WTC11 (cell line): ENCODE measurements at regions of chr2 and their contacts with region 1.

Region 1: GRCh38 chr2:10408649-10409579 is 39.2 kb downstream of the ODC1 start:
- DNase-seq: peak; percentile 90
- ATAC-seq: peak; percentile 94
- H3K4me3 Mint-ChIP-seq: no peak overlapping the region
- H3K27ac Mint-ChIP-seq: no peak overlapping the region
- H3K4me1 Mint-ChIP-seq: peaks cover 9% of the 10 kb centered on the region
- H3K27me3 Mint-ChIP-seq: no peaks in the 10 kb centered on the region
- CTCF ChIP-seq: peak; percentile 93

Region 2: DNA sequence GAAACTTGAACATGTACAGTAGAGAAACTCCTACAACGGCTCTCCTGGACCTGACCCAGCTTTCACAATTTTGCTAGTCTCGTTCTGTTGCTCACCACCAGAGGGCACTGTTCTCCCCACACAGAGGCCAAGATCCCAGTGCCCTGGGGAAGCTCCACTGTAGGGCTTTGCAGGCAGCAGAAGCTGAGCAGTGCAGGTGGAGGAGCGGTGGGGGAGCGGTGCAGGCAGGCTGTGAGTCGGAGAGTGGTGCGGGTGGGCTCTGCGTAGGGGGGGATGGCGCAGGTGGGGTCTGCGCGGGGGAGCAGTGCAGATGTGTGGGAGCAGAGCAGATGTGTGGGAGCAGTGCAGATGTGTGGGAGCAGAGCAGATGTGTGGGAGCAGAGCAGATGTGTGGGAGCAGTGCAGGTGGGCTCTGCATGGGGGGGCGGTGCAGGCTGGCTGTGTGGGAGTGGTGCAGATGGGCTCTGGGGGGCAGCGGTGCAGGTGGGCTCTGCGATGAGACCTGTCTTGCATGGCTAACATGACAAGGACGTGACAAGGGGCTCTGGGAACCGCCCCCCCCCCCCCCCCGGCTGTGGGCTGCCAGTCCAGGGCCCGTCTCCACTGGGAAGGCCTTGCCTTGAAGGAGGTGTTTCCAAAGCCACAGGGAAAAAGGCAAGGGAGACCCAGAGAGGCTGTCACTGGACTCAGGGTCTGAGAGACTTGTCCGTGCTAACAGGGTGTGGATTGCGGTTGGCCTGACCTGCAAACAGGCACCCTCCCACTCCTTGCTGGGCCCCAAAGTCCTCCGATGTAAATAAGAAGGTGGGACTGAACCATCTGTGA is 336.0 kb before region 1 on chr2:
- CTCF ChIA-PET with region 1: interaction called, 21 read pairs
- POLR2A ChIA-PET with region 1: no interaction called
- DNase-seq: peak; percentile 83
- ATAC-seq: peak; percentile 97
- H3K4me3 Mint-ChIP-seq: no peak overlapping the region
- H3K27ac Mint-ChIP-seq: no peak overlapping the region
- H3K4me1 Mint-ChIP-seq: peaks cover 18% of the 10 kb centered on the region
- H3K27me3 Mint-ChIP-seq: peaks cover 14% of the 10 kb centered on the region
- CTCF ChIP-seq: peak; percentile 89

Region 3: GRCh38 chr2:10162586-10163497 is 246.1 kb before region 1 on chr2:
- CTCF ChIA-PET with region 1: interaction called, 24 read pairs
- POLR2A ChIA-PET with region 1: no interaction called
- DNase-seq: peak; percentile 56
- ATAC-seq: peak; percentile 66
- H3K4me3 Mint-ChIP-seq: no peak overlapping the region
- H3K27ac Mint-ChIP-seq: peak overlapping the region; percentile 91
- H3K4me1 Mint-ChIP-seq: 0 out of 2 replicates have a peak, but pooled peaks cover 3% of the 10 kb centered on the region
- H3K27me3 Mint-ChIP-seq: no peaks in the 10 kb centered on the region
- CTCF ChIP-seq: no peak

Region 4: DNA sequence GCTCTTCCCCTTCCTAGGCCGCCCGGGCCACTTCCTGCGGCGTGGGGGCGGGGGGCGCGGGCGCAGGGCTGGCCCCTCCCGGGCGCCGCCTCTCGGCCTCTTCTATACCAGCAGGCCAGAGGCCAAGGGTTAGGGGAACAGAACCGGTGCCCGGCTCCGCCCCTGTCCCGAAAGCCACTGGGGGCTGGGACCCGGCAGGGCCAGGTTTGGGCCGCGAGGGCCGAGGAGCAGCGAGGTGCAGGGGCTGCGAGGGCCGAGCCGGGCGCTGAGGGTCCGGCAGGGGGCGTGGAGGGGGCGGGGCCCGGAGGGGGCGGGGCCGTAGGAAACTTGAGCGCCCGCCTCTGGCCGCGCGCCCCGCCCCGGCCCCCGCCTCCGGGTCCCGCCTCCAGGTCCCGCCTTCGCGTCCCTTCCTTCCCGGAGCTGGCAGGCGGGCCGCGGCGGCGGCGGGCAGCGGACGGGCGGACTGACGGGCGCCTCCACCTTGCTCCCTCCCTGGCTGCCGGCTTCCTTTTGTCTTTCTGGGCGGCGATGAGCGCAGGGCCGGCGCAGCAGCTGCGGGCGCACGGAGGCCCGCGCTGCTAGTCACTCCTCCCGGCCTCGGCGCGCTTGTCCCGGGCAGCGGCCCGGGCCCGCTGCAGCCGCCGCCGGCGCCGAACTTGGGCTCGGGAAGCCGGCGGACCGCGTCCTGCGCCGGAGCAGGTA is 106.3 kb before region 1 on chr2 and contains the start of gene HPCAL1:
- CTCF ChIA-PET with region 1: interaction called, 100 read pairs
- POLR2A ChIA-PET with region 1: no interaction called
- DNase-seq: peak; percentile 97
- ATAC-seq: peak; percentile 97
- H3K4me3 Mint-ChIP-seq: peak within 1 kb of the TSS; percentile 84
- H3K27ac Mint-ChIP-seq: 0 out of 2 replicates have a peak within 1 kb of the TSS, but pooled peaks have one; percentile 42
- H3K4me1 Mint-ChIP-seq: peaks cover 24% of the 10 kb centered on the region
- H3K27me3 Mint-ChIP-seq: peaks cover 52% of the 10 kb centered on the region
- CTCF ChIP-seq: peak; percentile 31
- total RNA-seq, gene HPCAL1: 10.5 to 12.4 TPM (median 11.8 TPM) in 3 replicates

Region 5: DNA sequence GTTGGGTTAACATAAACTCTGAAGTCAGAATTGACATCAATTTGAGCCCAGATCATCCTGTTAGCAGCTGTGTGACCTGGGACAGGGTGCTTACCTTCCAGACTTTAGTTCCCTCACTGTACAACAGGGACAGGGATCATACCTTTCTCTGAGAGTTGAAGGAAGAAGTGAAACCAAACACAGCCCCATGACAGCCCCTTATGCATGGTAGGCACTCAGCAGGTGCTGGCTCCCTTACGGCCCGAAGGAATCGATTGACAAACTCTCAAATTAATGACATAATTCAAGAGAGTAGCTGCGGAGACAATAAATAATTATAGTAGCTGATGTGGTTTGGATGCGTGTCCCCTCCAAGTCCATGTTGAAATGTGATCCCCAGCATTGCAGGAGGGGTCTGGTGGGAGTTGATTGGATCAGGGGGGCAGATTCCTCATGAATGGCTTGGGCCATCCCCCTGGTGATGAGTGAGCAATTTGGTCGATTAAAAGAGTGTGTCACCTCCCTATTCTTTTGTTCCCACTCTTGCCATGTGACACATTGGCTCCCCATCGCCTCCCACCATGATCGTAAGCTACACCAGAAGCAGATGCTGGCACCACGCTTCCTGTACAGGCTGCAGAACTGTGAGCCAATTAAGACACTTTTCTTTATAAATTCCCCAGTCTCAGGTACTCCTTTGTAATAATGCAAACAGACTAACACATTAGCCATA is 33.2 kb before region 1 on chr2:
- CTCF ChIA-PET with region 1: interaction called, 15 read pairs
- POLR2A ChIA-PET with region 1: no interaction called
- DNase-seq: no peak
- ATAC-seq: peak; percentile 29
- H3K4me3 Mint-ChIP-seq: no peak overlapping the region
- H3K27ac Mint-ChIP-seq: peak overlapping the region; percentile 4; the same call in 1 of the 2 replicates
- H3K4me1 Mint-ChIP-seq: peaks cover 40% of the 10 kb centered on the region
- H3K27me3 Mint-ChIP-seq: no peaks in the 10 kb centered on the region
- CTCF ChIP-seq: no peak

Region 6: GRCh38 chr2:10424051-10424450 is 15.1 kb after region 1 on chr2:
- CTCF ChIA-PET with region 1: interaction called, 16 read pairs
- POLR2A ChIA-PET with region 1: interaction called, 3 read pairs
- DNase-seq: no peak
- ATAC-seq: 0 out of 2 replicates have a peak, but pooled peaks have one; percentile 28
- H3K4me3 Mint-ChIP-seq: no peak overlapping the region
- H3K27ac Mint-ChIP-seq: no peak overlapping the region
- H3K4me1 Mint-ChIP-seq: no peaks in the 10 kb centered on the region
- H3K27me3 Mint-ChIP-seq: no peaks in the 10 kb centered on the region
- CTCF ChIP-seq: no peak

Region 7: GRCh38 chr2:10597935-10598334 is 189.0 kb after region 1 on chr2:
- CTCF ChIA-PET with region 1: no interaction called
- POLR2A ChIA-PET with region 1: no interaction called
- DNase-seq: no peak
- ATAC-seq: no peak
- H3K4me3 Mint-ChIP-seq: no peak overlapping the region
- H3K27ac Mint-ChIP-seq: no peak overlapping the region
- H3K4me1 Mint-ChIP-seq: no peaks in the 10 kb centered on the region
- H3K27me3 Mint-ChIP-seq: no peaks in the 10 kb centered on the region
- CTCF ChIP-seq: no peak

Region 8: GRCh38 chr2:10608273-10608672 is 199.4 kb after region 1 on chr2:
- CTCF ChIA-PET with region 1: no interaction called
- POLR2A ChIA-PET with region 1: no interaction called
- DNase-seq: no peak
- ATAC-seq: no peak
- H3K4me3 Mint-ChIP-seq: no peak overlapping the region
- H3K27ac Mint-ChIP-seq: no peak overlapping the region
- H3K4me1 Mint-ChIP-seq: no peaks in the 10 kb centered on the region
- H3K27me3 Mint-ChIP-seq: no peaks in the 10 kb centered on the region
- CTCF ChIP-seq: no peak